ENCODE measurements at regions of chr5 and their contacts with region 1.

Region 1: GRCh38 chr5:1763548-1763911 is 36.1 kb downstream of the MRPL36 start:
- DNase-seq: peak in 6 of 10 donors; percentile 2 to 41 (median 28)
- H3K4me3 ChIP-seq: no peak overlapping the region
- H3K27ac ChIP-seq: no peak overlapping the region
- H3K27me3 ChIP-seq: peaks cover 0 to 59% (median 14%) of the 10 kb centered on the region in 45 donors
- CTCF ChIP-seq: peak in 40 of 56 donors; percentile 10 to 56 (median 34)

Region 2: DNA sequence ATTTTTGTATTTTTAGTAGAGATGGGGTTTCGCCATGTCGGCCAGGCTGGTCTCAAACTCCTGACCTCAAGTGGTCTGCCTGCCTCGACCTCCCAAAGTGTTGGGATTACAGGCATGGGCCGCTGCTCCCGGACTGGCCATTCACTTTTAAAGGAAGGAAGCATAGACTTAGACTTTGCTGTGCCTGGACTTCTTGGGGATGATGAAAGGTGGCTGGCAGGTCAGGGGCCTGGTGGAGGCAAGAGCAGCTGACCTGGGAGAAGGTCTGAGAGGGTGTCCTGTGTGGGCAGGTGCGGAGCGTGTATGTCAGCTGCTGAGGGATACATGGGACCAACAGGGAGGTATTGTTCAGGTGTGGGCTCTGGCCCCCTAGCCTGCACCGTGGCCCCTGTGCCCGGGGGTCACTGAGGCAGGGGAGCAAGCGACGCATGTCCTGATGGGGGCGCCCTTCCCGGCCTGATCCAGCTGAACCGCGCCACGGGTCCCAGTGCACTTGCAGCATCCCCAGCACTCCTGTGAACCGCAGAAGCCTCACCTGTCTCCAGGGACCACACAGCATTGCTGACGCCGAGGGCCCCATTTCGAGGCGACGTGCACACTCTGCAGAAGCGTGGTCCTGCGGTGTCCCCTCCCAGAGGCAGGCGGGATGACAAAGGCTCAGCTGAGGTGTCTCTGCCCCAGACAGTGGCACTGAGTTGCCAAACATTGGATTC is 60.7 kb after region 1 on chr5:
- intact Hi-C with region 1: no loop called
- DNase-seq: peak in 2 of 10 donors; percentile 23 to 26
- H3K4me3 ChIP-seq: no peak overlapping the region
- H3K27ac ChIP-seq: no peak overlapping the region
- H3K27me3 ChIP-seq: no peaks in the 10 kb centered on the region
- CTCF ChIP-seq: no peak

Region 3: GRCh38 chr5:2038321-2039179 is 275.0 kb after region 1 on chr5:
- intact Hi-C with region 1: loop called in 1 of 2 experiments (anchors 5 kb)
- DNase-seq: peak in 8 of 10 donors; percentile 17 to 78 (median 54)
- H3K4me3 ChIP-seq: peak overlapping the region; percentile 37 to 77 (median 62)
- H3K27ac ChIP-seq: peak overlapping the region in 1 of 59 donors; percentile 36
- H3K27me3 ChIP-seq: peaks cover 0 to 6% (median 0%) of the 10 kb centered on the region in 45 donors
- CTCF ChIP-seq: peak in 55 of 56 donors; percentile 48 to 84 (median 69)

Measured in dorsolateral prefrontal cortex (tissue), 120 donors.